A673 (cell line): ENCODE measurements at regions of chr7 and their contacts with region 1.

Region 1: GRCh38 chr7:68733219-68734148 is 864.8 kb upstream of the AUTS2 start:
- DNase-seq: no peak
- H3K4me3 ChIP-seq: no peak overlapping the region
- H3K27ac ChIP-seq: no peak overlapping the region
- H3K4me1 ChIP-seq: no peaks in the 10 kb centered on the region
- H3K27me3 ChIP-seq: no peaks in the 10 kb centered on the region
- CTCF ChIP-seq: no peak

Region 2: GRCh38 chr7:68613405-68613804 is 120.1 kb before region 1 on chr7:
- CTCF ChIA-PET with region 1: no interaction called
- POLR2A ChIA-PET with region 1: no interaction called
- intact Hi-C with region 1: loop called (anchors 10 kb)
- DNase-seq: peak; percentile 89
- H3K4me3 ChIP-seq: no peak overlapping the region
- H3K27ac ChIP-seq: peak overlapping the region; percentile 78
- H3K4me1 ChIP-seq: peaks cover 14% of the 10 kb centered on the region
- H3K27me3 ChIP-seq: no peaks in the 10 kb centered on the region
- CTCF ChIP-seq: no peak